Activated CD8-positive, alpha-beta memory T cell treated with anti-CD3 and anti-CD28 coated beads, Interleukin-2, amount 10 ng/mL, durations not matched to agents 7 days and 5 days (primary cell): ENCODE measurements at regions of chr1 and their contacts with region 1.

Region 1: GRCh38 chr1:30779294-30780071 is 21.9 kb upstream of the LAPTM5 start:
- DNase-seq: peak; percentile 93
- ATAC-seq: peak; percentile 77
- H3K4me3 Mint-ChIP-seq: no peak overlapping the region
- H3K27ac Mint-ChIP-seq: no peak overlapping the region
- H3K4me1 Mint-ChIP-seq: peaks cover 13% of the 10 kb centered on the region
- H3K27me3 Mint-ChIP-seq: peaks cover 7% of the 10 kb centered on the region

Region 2: DNA sequence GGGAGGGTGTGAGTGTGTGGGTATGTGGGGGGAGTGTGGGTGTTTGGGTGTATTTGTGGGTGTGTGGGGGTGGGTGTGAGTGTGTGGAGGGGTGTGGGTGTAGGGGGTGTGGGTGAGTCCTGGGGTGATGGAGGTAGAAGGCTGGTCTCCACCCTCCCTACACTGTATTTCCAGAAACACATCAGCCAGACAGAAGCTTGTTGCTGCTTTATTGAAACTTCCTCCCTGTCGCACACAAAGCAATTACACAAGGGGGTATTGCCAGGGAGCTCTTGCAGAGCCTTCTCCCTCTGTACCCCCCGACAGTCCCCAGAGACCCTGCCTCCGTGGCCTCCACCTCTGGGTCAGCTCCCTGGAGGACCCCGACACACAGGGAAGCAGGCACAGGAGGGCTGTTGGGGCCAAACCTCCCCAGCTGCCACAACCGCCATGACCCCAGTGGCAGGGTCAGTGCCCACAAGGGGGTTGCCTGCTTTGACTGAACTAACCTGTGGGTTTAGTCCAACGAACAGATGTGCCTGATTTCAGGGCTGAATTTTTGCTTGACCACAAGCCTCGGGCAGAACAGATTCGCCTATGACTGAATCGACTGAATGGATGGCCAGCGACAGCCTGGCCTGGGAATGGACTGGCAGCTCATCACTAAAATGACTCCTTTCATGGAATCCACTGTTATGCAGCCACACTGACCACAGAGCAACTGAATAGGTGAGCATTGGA is 47.0 kb before region 1 on chr1:
- CTCF ChIA-PET with region 1: interaction called, 759 read pairs
- DNase-seq: no peak
- ATAC-seq: no peak
- H3K4me3 Mint-ChIP-seq: no peak overlapping the region
- H3K27ac Mint-ChIP-seq: peak overlapping the region; percentile 26
- H3K4me1 Mint-ChIP-seq: peaks cover 19% of the 10 kb centered on the region
- H3K27me3 Mint-ChIP-seq: no peaks in the 10 kb centered on the region

Region 3: DNA sequence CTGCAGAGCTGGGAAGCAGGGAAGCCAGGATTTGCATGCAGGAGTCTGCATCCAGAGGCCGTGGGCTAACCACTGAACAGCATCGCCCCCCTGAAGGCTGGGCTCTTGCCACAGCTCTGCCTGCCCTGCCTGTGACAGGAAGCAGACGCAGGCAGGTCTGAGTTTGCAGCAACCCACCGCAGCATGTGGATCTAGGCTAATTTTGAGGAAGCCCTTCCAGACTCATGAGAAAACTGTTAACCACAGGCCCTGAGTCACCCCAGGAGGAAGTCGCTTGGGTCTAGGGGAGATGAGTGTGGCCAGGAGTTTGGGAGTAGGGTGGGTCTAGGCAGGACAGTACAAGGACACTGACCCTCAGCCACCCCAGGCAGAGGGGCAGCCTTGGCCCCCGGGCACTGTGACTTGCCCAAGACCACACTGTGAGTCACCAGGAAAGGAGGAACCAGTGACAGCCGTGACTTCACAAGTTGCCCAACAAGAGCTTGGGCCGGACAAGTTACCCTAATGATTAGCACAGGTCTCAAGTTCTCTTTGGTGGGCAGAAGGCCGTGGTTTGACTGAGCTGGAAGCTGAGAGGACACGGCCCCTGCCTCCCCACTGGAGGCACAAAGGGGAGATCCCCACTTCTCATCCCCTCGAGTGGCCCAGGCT is 22.8 kb before region 1 on chr1:
- CTCF ChIA-PET with region 1: interaction called, 438 read pairs
- DNase-seq: peak; percentile 92
- ATAC-seq: peak; percentile 69
- H3K4me3 Mint-ChIP-seq: peak overlapping the region; percentile 98
- H3K27ac Mint-ChIP-seq: peak overlapping the region; percentile 95
- H3K4me1 Mint-ChIP-seq: peaks cover 82% of the 10 kb centered on the region
- H3K27me3 Mint-ChIP-seq: no peaks in the 10 kb centered on the region

Region 4: GRCh38 chr1:30911046-30911954 is 131.8 kb after region 1 on chr1:
- CTCF ChIA-PET with region 1: interaction called, 54 read pairs
- DNase-seq: peak; percentile 68
- ATAC-seq: peak; percentile 42
- H3K4me3 Mint-ChIP-seq: no peak overlapping the region
- H3K27ac Mint-ChIP-seq: no peak overlapping the region
- H3K4me1 Mint-ChIP-seq: peaks cover 14% of the 10 kb centered on the region
- H3K27me3 Mint-ChIP-seq: peaks cover 36% of the 10 kb centered on the region

Region 5: DNA sequence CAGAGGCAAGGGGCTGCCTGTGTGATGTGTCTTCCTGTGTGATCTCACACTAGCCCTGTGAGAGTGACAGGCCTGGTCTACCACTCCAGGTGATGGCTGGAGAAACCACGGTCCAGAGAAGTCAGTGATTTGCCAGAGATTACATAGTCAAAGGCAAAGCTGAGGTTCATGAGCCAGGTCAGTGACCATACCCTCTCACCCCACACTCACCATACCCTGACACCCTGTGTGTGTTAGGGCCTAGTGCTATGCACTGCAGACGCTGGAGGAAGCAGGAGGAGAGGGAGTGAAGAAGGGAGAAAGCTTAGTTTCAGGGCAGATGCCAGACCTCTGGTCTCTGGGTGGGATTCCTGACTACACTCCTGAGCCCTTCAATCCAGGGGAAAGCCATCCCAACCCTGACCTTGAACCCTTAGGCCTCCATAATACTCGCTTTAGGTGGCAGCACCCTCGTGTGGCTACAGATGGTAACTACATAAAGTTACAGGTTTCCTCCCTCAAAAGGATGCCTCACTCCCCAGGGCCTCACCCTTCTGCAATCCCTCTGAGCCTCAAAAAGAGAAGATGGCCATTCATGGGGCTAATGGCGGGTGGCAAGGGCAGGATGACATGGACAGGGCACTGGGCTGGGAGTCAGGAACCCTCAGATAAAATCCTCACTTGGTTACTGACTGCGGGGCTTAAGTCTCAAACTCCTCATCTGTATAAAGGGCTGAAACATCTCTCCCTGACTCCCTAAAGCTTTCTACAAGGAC is 149.8 kb after region 1 on chr1:
- CTCF ChIA-PET with region 1: interaction called, 28 read pairs
- DNase-seq: peak; percentile 65
- ATAC-seq: peak; percentile 76
- H3K4me3 Mint-ChIP-seq: no peak overlapping the region
- H3K27ac Mint-ChIP-seq: peak overlapping the region; percentile 8
- H3K4me1 Mint-ChIP-seq: peaks cover 8% of the 10 kb centered on the region
- H3K27me3 Mint-ChIP-seq: no peaks in the 10 kb centered on the region